Activated CD4-positive, alpha-beta T cell treated with anti-CD3 and anti-CD28 coated beads, Interleukin-2, amount 10 ng/mL, durations not matched to agents 7 days and 5 days (primary cell): ENCODE measurements at regions of chr5 and their contacts with region 1.

Region 1: GRCh38 chr5:157748760-157749461 is 5.4 kb downstream of the LSM11 start:
- DNase-seq: no peak
- H3K4me3 Mint-ChIP-seq: no peak overlapping the region
- H3K27ac Mint-ChIP-seq: no peak overlapping the region
- H3K4me1 Mint-ChIP-seq: peaks cover 30% of the 10 kb centered on the region
- H3K27me3 Mint-ChIP-seq: no peaks in the 10 kb centered on the region

Region 2: GRCh38 chr5:157681048-157681447 is 67.9 kb before region 1 on chr5:
- CTCF ChIA-PET with region 1: no interaction called
- POLR2A ChIA-PET with region 1: no interaction called
- DNase-seq: no peak
- H3K4me3 Mint-ChIP-seq: no peak overlapping the region
- H3K27ac Mint-ChIP-seq: no peak overlapping the region
- H3K4me1 Mint-ChIP-seq: no peaks in the 10 kb centered on the region
- H3K27me3 Mint-ChIP-seq: no peaks in the 10 kb centered on the region

Region 3: DNA sequence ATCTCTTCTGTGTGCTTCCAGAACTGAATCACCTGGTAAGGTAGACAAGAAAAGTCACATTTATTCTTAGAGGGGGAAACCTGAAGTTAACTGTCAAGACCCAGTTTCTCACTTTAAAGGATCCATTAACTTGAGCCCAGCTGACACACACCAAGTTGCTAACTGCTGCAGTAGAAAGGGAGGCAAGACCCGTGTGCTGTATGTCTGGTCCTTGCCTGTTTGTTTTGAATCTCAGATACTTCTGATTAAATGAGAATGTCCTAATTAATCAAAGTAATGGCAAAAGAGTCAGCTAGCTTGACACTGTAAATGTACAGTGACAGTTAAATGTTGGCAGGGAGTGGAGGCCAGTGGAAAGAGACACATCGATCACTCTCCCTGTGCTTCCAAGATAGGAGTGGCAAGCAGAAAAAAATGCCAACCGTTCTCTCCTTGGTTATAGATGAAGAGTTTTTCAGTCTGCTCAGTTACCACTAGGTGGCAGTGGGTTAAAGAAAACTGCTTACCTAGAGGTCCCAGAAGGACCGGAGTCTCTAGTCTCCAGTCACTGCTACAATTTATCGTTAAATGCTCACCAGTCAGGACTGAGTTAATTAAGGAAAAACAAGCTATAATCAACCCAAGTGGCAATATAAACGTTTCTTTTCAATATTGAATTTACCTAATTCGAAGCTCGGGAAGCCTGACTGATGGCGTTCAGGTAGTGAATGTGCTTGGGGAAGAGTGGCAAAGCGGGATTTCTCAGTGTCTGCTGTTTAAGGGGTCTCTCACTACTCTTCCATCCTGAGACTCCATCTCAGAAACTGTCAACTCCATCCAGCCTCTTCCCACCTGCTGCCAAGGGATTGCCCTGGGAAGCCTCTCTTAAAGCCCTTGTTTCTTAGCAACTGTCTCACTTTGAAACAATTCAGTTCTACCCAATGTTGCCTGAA is 13.0 kb after region 1 on chr5:
- CTCF ChIA-PET with region 1: interaction called, 16 read pairs
- POLR2A ChIA-PET with region 1: no interaction called
- DNase-seq: peak; percentile 51
- H3K4me3 Mint-ChIP-seq: no peak overlapping the region
- H3K27ac Mint-ChIP-seq: no peak overlapping the region
- H3K4me1 Mint-ChIP-seq: peaks cover 8% of the 10 kb centered on the region
- H3K27me3 Mint-ChIP-seq: no peaks in the 10 kb centered on the region